BJ (cell line): ENCODE measurements at regions of chr15 and their contacts with region 1.

Region 1: GRCh38 chr15:40893733-40894688 is at the start of gene VPS18:
- DNase-seq: peak; percentile 72
- H3K4me3 ChIP-seq: peak within 1 kb of the TSS; percentile 95
- H3K27me3 ChIP-seq: no peaks in the 10 kb centered on the region
- CTCF ChIP-seq: peak; percentile 92
- polyA plus RNA-seq, gene VPS18: 18.2 and 28.4 TPM in 2 replicates

Region 2: GRCh38 chr15:40593588-40594428 is 300.2 kb before region 1 on chr15 and contains the start of gene KNL1:
- CTCF ChIA-PET with region 1: interaction called, 19 read pairs
- POLR2A ChIA-PET with region 1: no interaction called
- DNase-seq: peak; percentile 93
- H3K4me3 ChIP-seq: peak within 1 kb of the TSS; percentile 91
- H3K27me3 ChIP-seq: no peaks in the 10 kb centered on the region; the same call in 1 of the 2 replicates
- CTCF ChIP-seq: no peak
- polyA plus RNA-seq, gene KNL1: 3.9 and 8.5 TPM in 2 replicates

Region 3: DNA sequence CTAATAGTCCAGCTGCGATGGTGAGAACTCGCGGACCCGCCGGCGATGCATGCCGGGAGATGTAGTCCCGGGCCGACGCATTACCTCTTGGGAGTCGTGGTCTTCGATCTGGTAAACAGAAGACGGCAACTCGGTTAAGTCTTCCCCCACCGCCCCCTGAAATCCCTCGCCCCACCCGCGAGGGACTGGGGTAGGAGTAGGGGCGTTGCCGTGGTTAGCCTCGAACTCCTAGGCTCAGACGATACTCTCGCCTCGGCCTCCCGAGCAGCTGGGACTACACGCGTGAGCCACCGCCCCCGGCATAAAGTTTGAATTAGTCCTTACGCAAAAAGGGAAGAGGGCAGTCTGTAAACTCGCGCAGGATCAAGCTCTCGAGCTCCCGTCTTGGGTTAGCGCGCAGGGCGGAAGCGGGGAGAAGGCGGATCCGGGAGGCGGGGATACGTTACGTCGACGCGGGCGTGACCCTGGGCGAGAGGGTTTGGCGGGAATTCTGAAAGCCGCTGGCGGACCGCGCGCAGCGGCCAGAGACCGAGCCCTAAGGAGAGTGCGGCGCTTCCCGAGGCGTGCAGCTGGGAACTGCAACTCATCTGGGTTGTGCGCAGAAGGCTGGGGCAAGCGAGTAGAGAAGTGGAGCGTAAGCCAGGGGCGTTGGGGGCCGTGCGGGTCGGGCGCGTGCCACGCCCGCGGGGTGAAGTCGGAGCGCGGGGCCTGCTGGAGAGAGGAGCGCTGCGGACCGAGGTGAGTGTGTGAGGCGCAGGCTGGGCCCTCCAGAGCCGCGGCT is 199.1 kb before region 1 on chr15 and contains the start of gene RAD51:
- CTCF ChIA-PET with region 1: interaction called, 12 read pairs
- POLR2A ChIA-PET with region 1: no interaction called
- DNase-seq: peak; percentile 77
- H3K4me3 ChIP-seq: peak within 1 kb of the TSS; percentile 89
- H3K27me3 ChIP-seq: no peaks in the 10 kb centered on the region
- CTCF ChIP-seq: no peak
- polyA plus RNA-seq, gene RAD51: 8.9 TPM in 2 replicates

Region 4: GRCh38 chr15:40821195-40821594 is 72.8 kb before region 1 on chr15:
- CTCF ChIA-PET with region 1: no interaction called
- POLR2A ChIA-PET with region 1: no interaction called
- DNase-seq: no peak
- H3K4me3 ChIP-seq: no peak overlapping the region
- H3K27me3 ChIP-seq: peaks cover 2% of the 10 kb centered on the region; the same call in 1 of the 2 replicates
- CTCF ChIP-seq: no peak

Region 5: GRCh38 chr15:40847205-40847961 is 46.6 kb before region 1 on chr15:
- CTCF ChIA-PET with region 1: interaction called, 14 read pairs
- POLR2A ChIA-PET with region 1: no interaction called
- DNase-seq: no peak
- H3K4me3 ChIP-seq: no peak overlapping the region
- H3K27me3 ChIP-seq: peaks cover 12% of the 10 kb centered on the region
- CTCF ChIP-seq: no peak

Region 6: GRCh38 chr15:40873625-40874561 is 20.1 kb before region 1 on chr15 and contains the start of gene RHOV:
- CTCF ChIA-PET with region 1: interaction called, 34 read pairs
- POLR2A ChIA-PET with region 1: no interaction called
- DNase-seq: no peak
- H3K4me3 ChIP-seq: peak within 1 kb of the TSS; percentile 46
- H3K27me3 ChIP-seq: peaks cover 8% of the 10 kb centered on the region
- CTCF ChIP-seq: peak; percentile 35; the same call in 1 of the 2 replicates
- polyA plus RNA-seq, gene RHOV: 0.13 and 0.28 TPM in 2 replicates

Region 7: GRCh38 chr15:40906091-40906990 is 12.3 kb after region 1 on chr15:
- CTCF ChIA-PET with region 1: interaction called, 76 read pairs
- POLR2A ChIA-PET with region 1: interaction called, 11 read pairs
- DNase-seq: peak; percentile 92
- H3K4me3 ChIP-seq: peak overlapping the region; percentile 25
- H3K27me3 ChIP-seq: no peaks in the 10 kb centered on the region
- CTCF ChIP-seq: peak; percentile 86

Region 8: GRCh38 chr15:41238100-41238499 is 344.1 kb after region 1 on chr15:
- CTCF ChIA-PET with region 1: no interaction called
- POLR2A ChIA-PET with region 1: interaction called, 15 read pairs
- DNase-seq: no peak
- H3K4me3 ChIP-seq: no peak overlapping the region
- H3K27me3 ChIP-seq: no peaks in the 10 kb centered on the region
- CTCF ChIP-seq: no peak